Esophagus muscularis mucosa (tissue), 4 donors: ENCODE measurements at regions of chr1 and their contacts with region 1.

Region 1: DNA sequence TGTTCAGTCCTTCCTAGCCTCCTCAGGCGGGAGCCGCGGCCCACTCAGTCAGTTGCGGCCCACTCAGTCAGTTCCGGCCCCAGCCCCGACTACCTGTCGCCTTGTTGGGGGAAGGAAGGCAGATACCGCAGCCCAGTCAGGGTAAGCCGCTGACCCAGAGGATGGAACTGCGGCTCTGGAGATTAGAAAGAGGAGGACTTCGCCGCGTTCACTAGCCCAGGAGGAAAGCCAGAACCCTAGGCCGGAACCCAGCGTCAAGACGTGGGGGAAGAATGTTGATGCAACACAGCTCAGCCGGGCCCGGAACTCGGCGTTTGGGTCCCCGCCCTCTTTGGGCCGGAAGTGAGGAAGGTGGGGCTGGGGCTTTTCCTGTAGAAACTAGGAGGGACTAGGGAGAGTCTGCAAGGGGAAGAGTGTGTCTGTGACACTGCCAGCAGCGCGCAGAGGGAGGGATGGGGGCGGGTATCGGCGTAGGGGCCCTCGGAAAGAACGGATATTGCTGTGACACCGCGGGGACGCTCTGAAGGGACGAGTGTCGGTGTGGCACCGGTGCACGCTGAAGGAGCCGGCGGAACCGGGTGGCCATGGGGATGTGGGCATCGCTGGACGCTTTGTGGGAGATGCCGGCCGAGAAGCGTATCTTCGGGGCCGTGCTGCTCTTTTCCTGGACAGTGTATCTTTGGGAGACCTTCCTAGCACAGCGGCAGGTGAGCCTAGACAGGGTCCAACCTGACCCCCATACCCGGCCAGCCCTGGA is at the start of gene ZMPSTE24:
- DNase-seq: peak; percentile 99
- H3K4me3 ChIP-seq: peak within 1 kb of the TSS; percentile 74 to 94 (median 88)
- H3K27ac ChIP-seq: peak within 1 kb of the TSS; percentile 91 to 96 (median 94)
- H3K4me1 ChIP-seq: peaks cover 46 to 63% (median 61%) of the 10 kb centered on the region in 4 donors
- H3K27me3 ChIP-seq: no peaks in the 10 kb centered on the region
- CTCF ChIP-seq: peak in 1 of 3 experiments; percentile 11
- EP300 ChIP-seq: no peak
- POLR2A ChIP-seq: peak; percentile 13
- total RNA-seq, gene ZMPSTE24: 37.4 to 49.8 (median 48.9) TPM

Region 2: DNA sequence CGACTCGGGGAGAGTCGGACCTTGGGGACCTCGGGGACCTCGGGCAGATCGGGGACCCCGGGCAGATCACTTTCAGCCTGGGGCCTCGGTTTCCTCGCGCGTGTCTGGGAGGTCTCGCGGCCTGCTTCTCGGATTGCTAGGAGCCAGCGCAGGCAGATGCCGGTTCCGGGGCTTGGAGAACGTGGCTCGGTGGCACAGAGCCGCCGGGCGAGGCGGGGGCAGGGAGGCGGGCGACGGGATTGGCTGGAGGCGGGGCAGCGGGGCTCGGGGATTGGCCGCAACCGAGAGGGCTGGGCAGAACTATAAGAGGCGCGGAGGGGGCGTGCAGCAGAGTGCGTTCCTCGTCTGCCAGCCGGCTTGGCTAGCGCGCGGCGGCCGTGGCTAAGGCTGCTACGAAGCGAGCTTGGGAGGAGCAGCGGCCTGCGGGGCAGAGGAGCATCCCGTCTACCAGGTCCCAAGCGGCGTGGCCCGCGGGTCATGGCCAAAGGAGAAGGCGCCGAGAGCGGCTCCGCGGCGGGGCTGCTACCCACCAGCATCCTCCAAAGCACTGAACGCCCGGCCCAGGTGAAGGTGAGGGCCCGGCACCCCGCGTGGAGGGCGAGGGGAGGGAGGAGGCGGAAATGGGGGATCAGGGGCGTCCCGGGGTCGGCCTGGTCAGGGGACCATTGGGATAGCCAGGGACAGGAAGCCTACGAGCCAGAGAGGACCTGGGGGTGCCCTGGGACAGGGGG is 302.9 kb before region 1 on chr1 and contains the start of gene MFSD2A:
- intact Hi-C with region 1: loop called (anchors 10 kb)
- DNase-seq: peak; percentile 97
- H3K4me3 ChIP-seq: peak within 1 kb of the TSS; percentile 55 to 63 (median 60)
- H3K27ac ChIP-seq: peak within 1 kb of the TSS; percentile 49 to 70 (median 56)
- H3K4me1 ChIP-seq: peaks cover 25 to 48% (median 37%) of the 10 kb centered on the region in 4 donors
- H3K27me3 ChIP-seq: peaks cover 0 to 16% (median 0%) of the 10 kb centered on the region in 4 donors
- CTCF ChIP-seq: no peak
- EP300 ChIP-seq: no peak
- POLR2A ChIP-seq: no peak
- total RNA-seq, gene MFSD2A: 1.7 to 5.1 (median 4.1) TPM

Region 3: DNA sequence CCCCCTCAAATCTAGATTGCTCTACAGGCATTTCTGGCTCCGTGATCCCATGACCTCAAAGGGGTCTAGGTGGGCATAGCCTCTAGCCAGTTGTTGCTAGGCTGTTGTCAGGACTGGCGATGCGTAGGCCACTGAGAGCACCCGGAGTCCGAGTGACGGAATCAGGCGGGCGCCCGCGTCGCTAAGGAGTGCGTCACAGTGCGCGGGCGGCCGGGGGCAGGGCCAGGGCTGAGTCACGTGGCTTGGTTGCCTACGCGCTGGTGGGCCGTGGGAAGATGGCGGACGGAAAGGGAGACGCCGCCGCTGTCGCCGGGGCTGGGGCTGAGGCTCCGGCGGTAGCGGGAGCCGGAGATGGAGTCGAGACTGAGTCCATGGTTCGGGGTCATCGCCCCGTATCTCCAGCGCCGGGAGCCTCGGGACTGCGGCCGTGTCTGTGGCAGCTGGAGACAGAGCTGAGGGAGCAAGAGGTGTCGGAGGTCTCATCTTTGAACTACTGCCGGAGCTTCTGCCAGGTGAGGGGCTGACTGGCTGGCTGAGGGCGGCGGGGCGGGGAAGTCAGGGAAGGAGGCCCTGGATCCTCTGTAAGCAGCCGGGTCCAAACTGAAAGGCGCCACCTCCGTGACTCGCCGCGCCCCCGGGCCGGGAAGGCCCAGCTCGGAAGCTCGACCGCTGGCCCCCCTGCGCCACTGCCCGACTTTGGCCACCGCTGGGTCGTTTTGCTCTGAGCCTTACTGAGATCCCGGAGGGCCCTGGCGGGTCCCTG is 96.6 kb before region 1 on chr1 and contains the start of gene RLF:
- intact Hi-C with region 1: loop called (anchors 5 kb)
- DNase-seq: peak; percentile 99
- H3K4me3 ChIP-seq: peak within 1 kb of the TSS; percentile 73 to 92 (median 86)
- H3K27ac ChIP-seq: peak within 1 kb of the TSS; percentile 93 to 98 (median 96)
- H3K4me1 ChIP-seq: peaks cover 35 to 47% (median 44%) of the 10 kb centered on the region in 4 donors
- H3K27me3 ChIP-seq: no peaks in the 10 kb centered on the region
- CTCF ChIP-seq: peak in 1 of 3 experiments; percentile 27
- EP300 ChIP-seq: peak; percentile 27
- POLR2A ChIP-seq: peak; percentile 87
- total RNA-seq, gene RLF: 15.1 to 23.7 (median 21.2) TPM

Region 4: DNA sequence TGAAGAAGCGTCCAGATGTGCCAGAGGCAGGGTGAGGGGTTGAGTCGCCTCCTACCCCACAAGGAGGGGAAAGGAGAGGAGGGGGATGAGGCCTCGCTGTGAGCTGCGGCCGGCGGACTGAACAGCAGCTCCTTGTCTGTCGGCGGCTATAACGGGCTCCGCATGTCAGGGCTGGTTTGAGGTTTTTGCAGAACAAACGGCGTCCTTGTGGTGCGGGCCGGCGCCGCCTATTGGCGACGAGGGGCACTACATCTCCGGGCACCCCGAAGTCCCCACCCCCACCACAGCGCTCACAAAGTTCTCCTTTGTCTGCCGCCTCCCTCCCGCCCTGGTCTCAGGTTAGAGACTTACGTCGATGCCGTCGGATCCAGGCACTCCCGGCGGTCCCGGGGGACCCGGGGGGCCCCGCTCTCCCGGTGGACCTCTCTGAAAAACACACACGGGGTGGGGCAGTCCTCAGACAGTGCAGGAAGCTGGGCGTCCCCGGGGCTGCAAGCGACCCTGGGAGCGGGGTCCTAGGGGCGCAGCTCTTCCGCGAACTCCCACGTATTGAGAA is 57.5 kb after region 1 on chr1:
- intact Hi-C with region 1: loop called (anchors 5 kb)
- DNase-seq: peak; percentile 96
- H3K4me3 ChIP-seq: peak overlapping the region; percentile 50 to 62 (median 52)
- H3K27ac ChIP-seq: peak overlapping the region; percentile 45 to 68 (median 60)
- H3K4me1 ChIP-seq: peaks cover 24 to 31% (median 30%) of the 10 kb centered on the region in 4 donors
- H3K27me3 ChIP-seq: peaks cover 0 to 48% (median 20%) of the 10 kb centered on the region in 4 donors
- CTCF ChIP-seq: peak; percentile 92 to 99 (median 95)
- EP300 ChIP-seq: no peak
- POLR2A ChIP-seq: no peak

Region 5: GRCh38 chr1:40583980-40584379 is 326.1 kb after region 1 on chr1:
- intact Hi-C with region 1: no loop called
- DNase-seq: no peak
- H3K4me3 ChIP-seq: no peak overlapping the region
- H3K27ac ChIP-seq: no peak overlapping the region
- H3K4me1 ChIP-seq: peaks cover 0 to 9% (median 0%) of the 10 kb centered on the region in 4 donors
- H3K27me3 ChIP-seq: no peaks in the 10 kb centered on the region
- CTCF ChIP-seq: no peak
- EP300 ChIP-seq: no peak
- POLR2A ChIP-seq: no peak